Breast epithelium (tissue), 4 donors: ENCODE measurements at regions of chr10 and their contacts with region 1.

Region 1: GRCh38 chr10:113399065-113399464 is 153.8 kb upstream of the HABP2 start:
- DNase-seq: no peak
- H3K4me3 ChIP-seq: no peak overlapping the region
- H3K27ac ChIP-seq: no peak overlapping the region
- H3K4me1 ChIP-seq: peaks cover 0 to 4% of the 10 kb centered on the region in 2 donors
- H3K27me3 ChIP-seq: no peaks in the 10 kb centered on the region
- CTCF ChIP-seq: no peak
- POLR2A ChIP-seq: no peak

Region 2: GRCh38 chr10:112926906-112927688 is 472.0 kb before region 1 on chr10:
- intact Hi-C with region 1: no loop called
- DNase-seq: no peak
- H3K4me3 ChIP-seq: no peak overlapping the region
- H3K27ac ChIP-seq: no peak overlapping the region
- H3K4me1 ChIP-seq: no peaks in the 10 kb centered on the region
- H3K27me3 ChIP-seq: no peaks in the 10 kb centered on the region
- CTCF ChIP-seq: no peak
- POLR2A ChIP-seq: no peak

Region 3: GRCh38 chr10:113354711-113355110 is 44.4 kb before region 1 on chr10:
- intact Hi-C with region 1: loop called (anchors 2 kb)
- DNase-seq: no peak
- H3K4me3 ChIP-seq: no peak overlapping the region
- H3K27ac ChIP-seq: no peak overlapping the region
- H3K4me1 ChIP-seq: no peaks in the 10 kb centered on the region
- H3K27me3 ChIP-seq: no peaks in the 10 kb centered on the region
- CTCF ChIP-seq: no peak
- POLR2A ChIP-seq: no peak